Breast epithelium (tissue), 4 donors: ENCODE measurements at regions of chr1 and their contacts with region 1.

Region 1: DNA sequence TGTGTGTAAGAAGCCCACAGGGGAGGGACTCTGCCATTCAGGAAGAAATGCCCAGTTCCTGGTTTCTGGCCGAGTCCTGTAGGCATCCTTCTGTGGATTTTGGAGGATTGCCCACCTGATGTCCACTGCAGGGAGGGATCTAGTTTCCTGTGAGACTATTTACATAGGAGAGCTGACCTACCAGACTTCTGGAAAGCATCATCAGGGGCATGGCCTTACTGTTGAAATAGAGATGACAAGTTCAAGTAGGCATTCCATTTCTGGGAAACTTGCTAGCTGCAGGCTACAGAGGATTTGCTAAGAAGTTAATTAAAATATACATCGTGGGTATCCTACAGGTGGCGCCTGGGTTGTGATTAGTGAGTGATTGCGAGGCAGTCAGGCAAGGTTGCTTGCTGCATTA is 148.7 kb downstream of the HHAT start:
- DNase-seq: no peak
- H3K4me3 ChIP-seq: no peak overlapping the region
- H3K27ac ChIP-seq: no peak overlapping the region
- H3K4me1 ChIP-seq: no peaks in the 10 kb centered on the region
- H3K27me3 ChIP-seq: no peaks in the 10 kb centered on the region
- CTCF ChIP-seq: no peak
- POLR2A ChIP-seq: no peak

Region 2: GRCh38 chr1:209685821-209686220 is 791.6 kb before region 1 on chr1:
- intact Hi-C with region 1: no loop called
- DNase-seq: no peak
- H3K4me3 ChIP-seq: no peak overlapping the region
- H3K27ac ChIP-seq: no peak overlapping the region
- H3K4me1 ChIP-seq: no peaks in the 10 kb centered on the region
- H3K27me3 ChIP-seq: no peaks in the 10 kb centered on the region
- CTCF ChIP-seq: no peak
- POLR2A ChIP-seq: no peak

Region 3: DNA sequence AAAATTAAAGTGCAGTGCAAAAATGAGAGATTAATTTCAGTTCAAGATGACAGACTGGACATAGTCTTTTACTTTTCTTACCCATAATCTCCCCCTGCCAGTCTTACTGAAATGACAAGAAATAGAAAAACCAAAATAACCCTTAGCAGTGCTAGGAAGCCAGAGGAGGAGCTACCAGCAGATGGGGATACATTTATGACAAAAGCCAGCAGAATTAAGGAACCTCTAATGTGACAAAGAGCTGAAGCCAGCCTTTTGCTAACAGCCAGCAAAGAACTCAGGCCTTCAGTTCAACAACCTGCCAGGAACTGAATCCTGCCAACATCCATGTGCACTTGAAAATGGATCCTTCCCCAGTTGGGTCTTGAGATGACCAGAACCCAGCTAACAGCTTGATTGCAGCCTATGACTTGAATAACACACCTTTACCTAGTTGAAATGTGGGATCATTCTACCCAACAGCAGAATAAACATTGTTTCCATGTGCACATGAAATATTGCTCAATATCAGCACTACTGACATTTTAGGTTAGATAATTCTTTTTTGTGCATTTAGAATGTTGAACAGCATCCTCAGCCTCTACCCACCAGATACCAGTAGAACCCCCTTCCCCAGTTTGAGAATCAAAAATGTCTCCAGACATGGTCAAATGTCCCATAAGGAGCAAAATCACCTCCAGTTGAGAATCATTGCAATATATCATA is 841.3 kb after region 1 on chr1:
- intact Hi-C with region 1: loop called (anchors 5 kb)
- DNase-seq: no peak
- H3K4me3 ChIP-seq: no peak overlapping the region
- H3K27ac ChIP-seq: no peak overlapping the region
- H3K4me1 ChIP-seq: no peaks in the 10 kb centered on the region
- H3K27me3 ChIP-seq: no peaks in the 10 kb centered on the region
- CTCF ChIP-seq: no peak
- POLR2A ChIP-seq: no peak